IMR-90 (cell line): ENCODE measurements at regions of chr12 and their contacts with region 1.

Region 1: GRCh38 chr12:24728366-24728765 is 220.5 kb downstream of the BCAT1 start:
- DNase-seq: peak; percentile 55
- ATAC-seq: peak; percentile 74
- H3K4me3 ChIP-seq: no peak overlapping the region
- H3K27ac ChIP-seq: no peak overlapping the region
- H3K4me1 ChIP-seq: no peaks in the 10 kb centered on the region; the same call in 1 of the 2 replicates
- H3K27me3 ChIP-seq: no peaks in the 10 kb centered on the region
- CTCF ChIP-seq: peak; percentile 71
- POLR2A ChIP-seq: no peak
- RAD21 ChIP-seq: peak; percentile 78

Region 2: GRCh38 chr12:24109381-24110039 is 618.9 kb before region 1 on chr12:
- CTCF ChIA-PET with region 1: interaction called, 6 read pairs
- POLR2A ChIA-PET with region 1: no interaction called
- dilution Hi-C with region 1: no loop called
- in situ Hi-C with region 1: no loop called
- intact Hi-C with region 1: loop called (anchors 10 kb)
- DNase-seq: peak; percentile 32
- ATAC-seq: peak; percentile 42; the same call in 1 of the 2 replicates
- H3K4me3 ChIP-seq: no peak overlapping the region
- H3K27ac ChIP-seq: no peak overlapping the region
- H3K4me1 ChIP-seq: peaks cover 2% of the 10 kb centered on the region; the same call in 1 of the 2 replicates
- H3K27me3 ChIP-seq: no peaks in the 10 kb centered on the region
- CTCF ChIP-seq: peak; percentile 57
- POLR2A ChIP-seq: no peak
- RAD21 ChIP-seq: peak; percentile 54

Region 3: GRCh38 chr12:24360907-24361306 is 367.5 kb before region 1 on chr12:
- CTCF ChIA-PET with region 1: no interaction called
- POLR2A ChIA-PET with region 1: no interaction called
- dilution Hi-C with region 1: no loop called
- in situ Hi-C with region 1: no loop called
- intact Hi-C with region 1: loop called (anchors 5 kb)
- DNase-seq: peak; percentile 19
- ATAC-seq: peak; percentile 58
- H3K4me3 ChIP-seq: no peak overlapping the region
- H3K27ac ChIP-seq: no peak overlapping the region
- H3K4me1 ChIP-seq: peaks cover 6% of the 10 kb centered on the region
- H3K27me3 ChIP-seq: no peaks in the 10 kb centered on the region
- CTCF ChIP-seq: no peak
- POLR2A ChIP-seq: no peak
- RAD21 ChIP-seq: no peak

Region 4: DNA sequence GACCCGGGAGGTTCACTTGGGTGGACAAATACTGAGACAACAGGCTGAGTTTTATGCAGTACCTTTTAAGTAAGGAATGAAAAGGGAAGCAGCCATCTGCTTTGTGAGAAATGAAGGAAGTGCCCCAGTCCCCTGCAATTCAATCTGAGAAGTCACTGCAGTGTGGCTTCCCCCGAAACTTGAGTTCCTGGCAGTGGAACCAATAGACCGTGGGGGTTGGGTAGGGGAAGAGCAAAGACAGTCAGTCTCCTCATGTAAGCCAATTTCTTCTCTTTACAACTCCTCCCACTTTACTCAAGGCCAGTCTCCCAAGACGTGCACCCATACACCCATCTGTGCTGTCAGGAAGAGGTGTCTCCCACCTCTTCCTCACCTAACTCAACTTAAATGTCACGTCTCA is 14.0 kb after region 1 on chr12:
- CTCF ChIA-PET with region 1: no interaction called
- POLR2A ChIA-PET with region 1: no interaction called
- dilution Hi-C with region 1: no loop called
- in situ Hi-C with region 1: no loop called
- intact Hi-C with region 1: no loop called
- DNase-seq: no peak
- ATAC-seq: no peak
- H3K4me3 ChIP-seq: no peak overlapping the region
- H3K27ac ChIP-seq: no peak overlapping the region
- H3K4me1 ChIP-seq: no peaks in the 10 kb centered on the region; the same call in 1 of the 2 replicates
- H3K27me3 ChIP-seq: no peaks in the 10 kb centered on the region
- CTCF ChIP-seq: no peak
- POLR2A ChIP-seq: no peak
- RAD21 ChIP-seq: no peak

Region 5: DNA sequence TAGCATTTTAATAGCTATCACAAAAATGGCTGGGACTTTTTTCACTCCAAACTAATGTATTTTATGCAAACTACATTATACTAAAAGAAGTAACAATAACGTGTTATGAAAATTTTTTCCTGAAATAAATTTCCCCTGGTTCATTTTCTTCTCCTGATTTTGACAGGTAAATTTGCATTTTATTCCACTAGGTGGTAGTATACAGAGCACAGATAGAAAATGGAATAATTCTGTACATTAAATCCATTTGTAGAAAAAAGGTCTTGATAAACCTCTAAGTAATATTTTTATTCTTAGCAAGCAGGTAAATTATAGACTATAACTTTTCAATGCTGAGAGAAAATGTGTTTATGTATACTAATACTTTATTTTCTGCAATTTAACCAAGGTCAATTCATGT is 124.1 kb after region 1 on chr12:
- CTCF ChIA-PET with region 1: no interaction called
- POLR2A ChIA-PET with region 1: no interaction called
- dilution Hi-C with region 1: no loop called
- in situ Hi-C with region 1: no loop called
- intact Hi-C with region 1: no loop called
- DNase-seq: no peak
- ATAC-seq: no peak
- H3K4me3 ChIP-seq: no peak overlapping the region
- H3K27ac ChIP-seq: no peak overlapping the region
- H3K4me1 ChIP-seq: peaks cover 9% of the 10 kb centered on the region; the same call in 1 of the 2 replicates
- H3K27me3 ChIP-seq: no peaks in the 10 kb centered on the region
- CTCF ChIP-seq: peak; percentile 30; the same call in 1 of the 2 replicates
- POLR2A ChIP-seq: no peak
- RAD21 ChIP-seq: 0 out of 2 replicates have a peak, but pooled peaks have one; percentile 11

Region 6: DNA sequence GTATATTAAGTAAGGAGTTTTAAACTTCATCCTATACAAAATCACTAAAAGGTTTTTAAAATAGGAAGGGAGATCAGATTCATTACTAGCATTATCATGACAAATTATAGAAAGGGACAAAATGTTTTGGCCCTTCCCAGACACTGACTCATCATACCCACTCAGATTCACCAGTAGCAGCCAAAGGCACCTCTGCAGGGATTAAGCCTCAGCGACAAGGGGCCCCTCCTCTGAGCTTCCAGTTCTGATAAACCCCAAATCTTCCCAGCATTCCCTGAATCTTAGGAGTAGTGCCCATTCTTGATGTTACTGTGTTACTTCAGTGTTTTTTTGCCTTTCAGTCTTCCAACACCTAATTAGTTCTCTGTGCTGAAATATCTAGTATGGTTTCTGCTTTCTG is 507.8 kb after region 1 on chr12:
- CTCF ChIA-PET with region 1: no interaction called
- POLR2A ChIA-PET with region 1: no interaction called
- dilution Hi-C with region 1: no loop called
- in situ Hi-C with region 1: no loop called
- intact Hi-C with region 1: no loop called
- DNase-seq: peak; percentile 36
- ATAC-seq: peak; percentile 75
- H3K4me3 ChIP-seq: no peak overlapping the region
- H3K27ac ChIP-seq: no peak overlapping the region
- H3K4me1 ChIP-seq: peaks cover 8% of the 10 kb centered on the region
- H3K27me3 ChIP-seq: no peaks in the 10 kb centered on the region
- CTCF ChIP-seq: no peak
- POLR2A ChIP-seq: no peak
- RAD21 ChIP-seq: no peak